ENCODE measurements at regions of chr2 and their contacts with region 1.

Region 1: DNA sequence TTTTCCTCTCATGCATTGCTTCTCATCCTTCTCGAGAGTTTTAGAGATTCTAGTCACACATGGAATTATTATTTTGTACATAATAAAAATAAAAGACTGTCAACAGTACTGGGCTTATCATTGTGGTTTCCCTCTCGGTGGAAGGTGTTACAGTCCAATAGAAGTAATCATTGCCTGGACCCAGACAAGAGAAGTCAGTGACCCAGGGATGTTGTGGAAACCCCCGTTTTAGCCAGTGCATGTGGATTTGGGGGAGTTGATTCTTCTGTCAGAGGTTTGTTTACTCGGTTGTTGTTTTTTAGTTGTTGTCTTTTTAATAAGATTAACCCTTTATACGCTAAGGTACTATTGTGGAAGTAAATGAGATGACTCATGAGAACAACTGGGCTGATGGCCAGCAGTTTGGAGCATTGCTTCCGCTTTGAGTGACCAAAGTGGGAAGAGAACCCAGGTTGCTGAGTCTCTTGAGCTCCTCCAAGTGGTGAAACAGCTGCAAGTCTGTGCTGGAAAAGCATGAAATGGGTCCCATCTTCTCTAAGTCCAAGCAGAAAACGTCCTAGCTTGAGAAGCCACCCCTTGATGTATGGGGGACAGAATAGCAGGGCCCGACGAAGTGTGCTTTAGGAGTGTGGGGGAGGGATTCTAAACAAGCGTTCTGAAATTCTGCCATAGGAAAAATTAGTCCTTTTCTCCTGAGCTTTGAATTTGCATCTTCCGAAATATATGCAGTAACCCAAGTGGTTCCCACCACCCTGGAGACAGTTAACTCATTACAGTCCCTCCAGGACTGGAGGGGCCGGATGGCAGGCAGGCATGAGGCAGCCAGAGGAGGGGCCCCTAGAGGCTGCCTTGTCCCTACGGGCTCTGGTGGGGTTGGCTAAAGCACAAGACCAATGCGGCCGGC is 61.8 kb upstream of the GPR45 start:
- DNase-seq: no peak
- H3K4me3 ChIP-seq: no peak overlapping the region; a peak in 2 of 8 replicates
- H3K27ac ChIP-seq: no peak overlapping the region
- H3K4me1 ChIP-seq: peaks cover 6 to 17% (median 13%) of the 10 kb centered on the region in 4 experiments
- H3K27me3 ChIP-seq: peaks cover 0 to 27% (median 22%) of the 10 kb centered on the region in 4 experiments; a peak in 6 of 7 replicates
- CTCF ChIP-seq: peak; percentile 38 to 74 (median 65)
- EP300 ChIP-seq: no peak
- POLR2A ChIP-seq: no peak
- RAD21 ChIP-seq: peak; percentile 53 to 65

Region 2: GRCh38 chr2:105087273-105087672 is 92.4 kb before region 1 on chr2:
- CTCF ChIA-PET with region 1: no interaction called
- POLR2A ChIA-PET with region 1: no interaction called
- DNase-seq: no peak
- H3K4me3 ChIP-seq: no peak overlapping the region
- H3K27ac ChIP-seq: no peak overlapping the region
- H3K4me1 ChIP-seq: no peaks in the 10 kb centered on the region
- H3K27me3 ChIP-seq: no peaks in the 10 kb centered on the region
- CTCF ChIP-seq: no peak
- EP300 ChIP-seq: no peak
- POLR2A ChIP-seq: no peak
- RAD21 ChIP-seq: no peak

Region 3: GRCh38 chr2:105166688-105167087 is 13.0 kb before region 1 on chr2:
- CTCF ChIA-PET with region 1: interaction called, 21 read pairs
- POLR2A ChIA-PET with region 1: interaction called, 3 read pairs
- DNase-seq: peak in 1 of 2 experiments; percentile 39
- H3K4me3 ChIP-seq: no peak overlapping the region
- H3K27ac ChIP-seq: no peak overlapping the region
- H3K4me1 ChIP-seq: peaks cover 0 to 8% (median 5%) of the 10 kb centered on the region in 4 experiments; a peak in 3 of 7 replicates
- H3K27me3 ChIP-seq: no peaks in the 10 kb centered on the region; a peak in 1 of 7 replicates
- CTCF ChIP-seq: no peak
- EP300 ChIP-seq: no peak
- POLR2A ChIP-seq: no peak
- RAD21 ChIP-seq: no peak

Region 4: GRCh38 chr2:105278654-105279053 is 98.9 kb after region 1 on chr2:
- CTCF ChIA-PET with region 1: no interaction called
- POLR2A ChIA-PET with region 1: no interaction called
- DNase-seq: no peak
- H3K4me3 ChIP-seq: no peak overlapping the region
- H3K27ac ChIP-seq: no peak overlapping the region
- H3K4me1 ChIP-seq: no peaks in the 10 kb centered on the region
- H3K27me3 ChIP-seq: no peaks in the 10 kb centered on the region
- CTCF ChIP-seq: peak in 1 of 3 experiments; percentile 39; a peak in 1 of 4 replicates
- EP300 ChIP-seq: no peak
- POLR2A ChIP-seq: no peak
- RAD21 ChIP-seq: no peak; a peak in 1 of 4 replicates